SK-N-SH (cell line): ENCODE measurements at regions of chr5 and their contacts with region 1.

Region 1: DNA sequence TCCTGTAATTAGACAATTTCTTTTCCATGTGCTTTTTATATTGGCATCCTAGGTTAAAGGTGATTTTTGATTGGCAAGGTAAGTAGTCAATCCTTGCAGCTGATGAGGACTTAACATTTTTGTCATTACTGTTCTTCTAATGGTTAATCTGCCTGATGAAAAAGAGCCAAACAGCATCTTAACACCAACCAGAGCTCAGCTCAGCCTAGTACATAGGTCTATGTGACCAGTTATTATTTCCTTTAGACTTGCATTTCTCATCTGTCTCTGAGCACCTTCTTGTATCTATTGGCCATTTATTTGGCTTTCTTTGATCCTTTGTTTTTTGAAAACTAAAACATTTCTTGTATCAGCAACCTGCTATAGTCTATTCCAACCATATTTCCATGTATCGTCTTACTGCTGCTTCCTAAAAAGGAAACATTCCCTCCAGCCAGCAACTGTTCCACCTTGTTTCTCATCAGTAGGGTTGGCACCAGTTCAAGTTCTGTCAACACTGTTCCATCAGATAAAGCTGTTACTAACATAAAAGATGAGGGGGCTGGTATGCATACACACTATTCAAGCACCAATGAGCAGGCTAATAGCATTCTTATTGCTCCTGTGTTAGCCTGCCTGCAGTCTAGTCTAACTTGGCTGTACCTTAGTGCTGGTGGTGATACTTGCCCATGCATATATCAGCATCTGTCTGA is 178.2 kb downstream of the CWC27 start:
- DNase-seq: peak; percentile 36
- H3K4me3 ChIP-seq: no peak overlapping the region
- H3K27ac ChIP-seq: peak overlapping the region in 1 of 2 experiments; percentile 28; a peak in 1 of 4 replicates
- H3K4me1 ChIP-seq: peaks cover 0 to 7% of the 10 kb centered on the region in 2 experiments; a peak in 3 of 4 replicates
- H3K27me3 ChIP-seq: no peaks in the 10 kb centered on the region
- CTCF ChIP-seq: no peak
- EP300 ChIP-seq: peak in 1 of 2 experiments; percentile 63; a peak in 1 of 4 replicates
- RAD21 ChIP-seq: no peak

Region 2: DNA sequence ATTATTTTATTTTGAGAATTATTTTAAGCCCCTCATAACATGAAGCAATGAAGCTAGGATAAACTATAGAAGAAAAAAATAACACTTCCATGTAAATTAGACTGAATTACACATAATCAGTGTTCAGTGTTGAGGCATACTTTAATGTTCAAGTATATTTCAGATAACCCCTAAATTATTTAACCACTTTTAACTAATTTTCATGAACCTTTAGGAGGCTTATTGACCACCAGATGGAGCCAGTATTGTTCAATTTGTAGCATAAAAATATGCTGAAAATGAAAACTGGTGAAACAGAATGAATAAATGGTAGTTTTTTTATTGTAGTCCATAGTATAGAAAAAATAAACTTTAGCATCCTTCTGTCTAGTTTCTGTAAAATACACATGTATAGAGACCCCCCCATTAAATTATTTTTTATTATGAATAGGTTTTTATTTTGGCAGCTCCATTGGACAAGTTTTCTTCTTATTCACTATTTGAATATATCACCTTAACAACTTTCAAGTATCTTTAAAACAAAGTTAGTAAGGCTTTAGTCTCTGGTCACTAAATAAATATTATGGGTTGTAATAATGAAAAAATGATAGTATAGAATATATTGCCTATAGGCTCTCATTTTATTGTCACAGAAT is 12.0 kb after region 1 on chr5:
- CTCF ChIA-PET with region 1: interaction called, 23 read pairs
- POLR2A ChIA-PET with region 1: no interaction called
- DNase-seq: peak; percentile 11
- H3K4me3 ChIP-seq: no peak overlapping the region
- H3K27ac ChIP-seq: no peak overlapping the region
- H3K4me1 ChIP-seq: no peaks in the 10 kb centered on the region; a peak in 1 of 4 replicates
- H3K27me3 ChIP-seq: no peaks in the 10 kb centered on the region
- CTCF ChIP-seq: peak; percentile 81
- EP300 ChIP-seq: no peak
- RAD21 ChIP-seq: peak; percentile 79